Naive thymus-derived CD4-positive, alpha-beta T cell (primary cell): ENCODE measurements at regions of chr16 and their contacts with region 1.

Region 1: GRCh38 chr16:82671741-82672140 is 45.0 kb downstream of the CDH13 start:
- DNase-seq: peak in 1 of 9 donors; percentile 11
- ATAC-seq: no peak
- H3K4me3 ChIP-seq: no peak overlapping the region
- H3K4me3 Mint-ChIP-seq: no peak overlapping the region
- H3K27ac ChIP-seq: no peak overlapping the region
- H3K27ac Mint-ChIP-seq: no peak overlapping the region
- H3K4me1 ChIP-seq: no peaks in the 10 kb centered on the region
- H3K4me1 Mint-ChIP-seq: peaks cover 0 to 5% (median 0%) of the 10 kb centered on the region in 7 donors
- H3K27me3 ChIP-seq: no peaks in the 10 kb centered on the region
- H3K27me3 Mint-ChIP-seq: peaks cover 0 to 40% (median 0%) of the 10 kb centered on the region in 5 donors

Region 2: GRCh38 chr16:82639666-82640336 is 31.9 kb before region 1 on chr16:
- CTCF ChIA-PET with region 1: interaction called, 4 read pairs
- POLR2A ChIA-PET with region 1: no interaction called
- intact Hi-C with region 1: loop called (anchors 1 kb)
- DNase-seq: peak in 4 of 9 donors; percentile 14 to 50 (median 20)
- ATAC-seq: peak; percentile 76
- H3K4me3 ChIP-seq: no peak overlapping the region
- H3K4me3 Mint-ChIP-seq: no peak overlapping the region
- H3K27ac ChIP-seq: no peak overlapping the region
- H3K27ac Mint-ChIP-seq: no peak overlapping the region
- H3K4me1 ChIP-seq: peaks cover 0 to 4% of the 10 kb centered on the region in 2 donors
- H3K4me1 Mint-ChIP-seq: peaks cover 0 to 22% (median 0%) of the 10 kb centered on the region in 7 donors
- H3K27me3 ChIP-seq: no peaks in the 10 kb centered on the region
- H3K27me3 Mint-ChIP-seq: peaks cover 0 to 6% (median 4%) of the 10 kb centered on the region in 5 donors

Region 3: GRCh38 chr16:82748026-82748425 is 76.3 kb after region 1 on chr16:
- CTCF ChIA-PET with region 1: no interaction called
- POLR2A ChIA-PET with region 1: no interaction called
- intact Hi-C with region 1: no loop called
- DNase-seq: no peak
- ATAC-seq: no peak
- H3K4me3 ChIP-seq: no peak overlapping the region
- H3K4me3 Mint-ChIP-seq: no peak overlapping the region
- H3K27ac ChIP-seq: no peak overlapping the region
- H3K27ac Mint-ChIP-seq: no peak overlapping the region
- H3K4me1 ChIP-seq: no peaks in the 10 kb centered on the region
- H3K4me1 Mint-ChIP-seq: peaks cover 0 to 8% (median 0%) of the 10 kb centered on the region in 7 donors
- H3K27me3 ChIP-seq: peaks cover 0 to 4% of the 10 kb centered on the region in 2 donors
- H3K27me3 Mint-ChIP-seq: peaks cover 21 to 39% (median 26%) of the 10 kb centered on the region in 5 donors